H1 (cell line): ENCODE measurements at regions of chr9 and their contacts with region 1.

Region 1: DNA sequence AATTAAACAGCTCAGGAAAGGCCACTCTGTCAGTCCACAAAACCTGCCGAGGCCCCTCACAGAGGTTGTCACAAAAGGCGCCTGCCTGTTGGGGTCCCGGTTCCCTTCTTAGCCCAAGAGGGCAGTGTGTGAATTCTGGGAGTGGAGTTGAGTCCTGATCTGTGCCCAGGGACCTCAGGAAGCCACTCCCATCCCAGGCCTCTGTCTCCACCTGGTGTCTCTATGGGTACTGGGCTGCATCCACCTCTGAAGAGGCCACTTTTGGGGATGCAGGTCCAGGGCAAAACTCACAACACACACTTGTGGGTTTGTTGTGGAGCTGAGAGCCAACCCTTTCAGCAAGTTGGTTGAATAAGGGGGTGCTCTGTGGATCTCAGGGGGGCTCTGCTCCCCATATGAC is 74.3 kb upstream of the STXBP1 start:
- DNase-seq: no peak
- H3K4me3 ChIP-seq: no peak overlapping the region
- H3K27ac ChIP-seq: no peak overlapping the region
- H3K4me1 ChIP-seq: peaks cover 4 to 13% (median 10%) of the 10 kb centered on the region in 4 experiments; a peak in 5 of 7 replicates
- H3K27me3 ChIP-seq: no peaks in the 10 kb centered on the region
- CTCF ChIP-seq: peak in 2 of 3 experiments; percentile 65 to 80; a peak in 3 of 4 replicates
- EP300 ChIP-seq: no peak
- POLR2A ChIP-seq: no peak
- RAD21 ChIP-seq: peak; percentile 71 to 81

Region 2: GRCh38 chr9:127406799-127407509 is 130.8 kb before region 1 on chr9:
- CTCF ChIA-PET with region 1: no interaction called
- POLR2A ChIA-PET with region 1: no interaction called
- DNase-seq: no peak
- H3K4me3 ChIP-seq: no peak overlapping the region
- H3K27ac ChIP-seq: no peak overlapping the region
- H3K4me1 ChIP-seq: no peaks in the 10 kb centered on the region
- H3K27me3 ChIP-seq: no peaks in the 10 kb centered on the region
- CTCF ChIP-seq: no peak
- EP300 ChIP-seq: no peak
- POLR2A ChIP-seq: no peak
- RAD21 ChIP-seq: no peak

Region 3: DNA sequence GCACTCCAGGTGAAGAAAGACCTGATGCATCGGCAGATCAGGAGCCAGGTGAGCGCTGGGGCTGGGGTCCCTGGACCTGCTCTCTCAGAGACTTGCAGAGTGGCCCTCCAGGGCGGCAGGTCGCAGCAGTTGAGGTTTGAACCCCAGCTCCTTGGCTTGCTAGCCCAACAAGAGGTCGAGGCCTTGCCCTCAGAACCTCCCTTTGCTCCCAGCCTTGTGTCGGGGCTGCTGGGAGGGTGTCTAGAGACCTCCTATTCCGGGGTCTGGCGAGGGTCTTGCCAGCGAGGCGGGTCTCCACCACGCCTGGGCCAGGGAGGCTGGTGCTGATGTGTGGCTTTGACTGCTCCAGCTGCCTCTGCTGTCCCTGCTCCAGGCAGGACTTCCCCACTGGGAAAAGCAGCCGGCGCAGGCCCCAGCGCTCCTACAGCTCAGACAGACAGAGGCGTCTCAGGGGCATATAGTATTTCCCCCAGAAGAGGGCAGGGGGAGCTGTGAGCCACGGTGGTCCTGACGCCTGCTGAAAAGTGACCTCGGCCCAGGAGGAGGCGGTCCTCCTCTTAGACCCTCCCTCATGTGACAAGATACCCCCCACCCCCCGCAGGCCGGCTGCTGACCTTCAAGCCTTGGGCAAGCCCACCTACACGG is 48.2 kb before region 1 on chr9:
- CTCF ChIA-PET with region 1: interaction called, 12 read pairs
- POLR2A ChIA-PET with region 1: no interaction called
- DNase-seq: peak; percentile 64 to 79
- H3K4me3 ChIP-seq: no peak overlapping the region
- H3K27ac ChIP-seq: 0 out of 2 replicates have a peak overlapping the region, but pooled peaks have one; percentile 37
- H3K4me1 ChIP-seq: peaks cover 0 to 7% (median 2%) of the 10 kb centered on the region in 4 experiments; a peak in 5 of 7 replicates
- H3K27me3 ChIP-seq: no peaks in the 10 kb centered on the region
- CTCF ChIP-seq: peak; percentile 69 to 77 (median 72)
- EP300 ChIP-seq: no peak
- POLR2A ChIP-seq: no peak
- RAD21 ChIP-seq: peak; percentile 53 to 67

Region 4: GRCh38 chr9:127525401-127526187 is 12.2 kb before region 1 on chr9:
- CTCF ChIA-PET with region 1: interaction called, 105 read pairs
- POLR2A ChIA-PET with region 1: interaction called, 7 read pairs
- DNase-seq: no peak
- H3K4me3 ChIP-seq: no peak overlapping the region
- H3K27ac ChIP-seq: no peak overlapping the region
- H3K4me1 ChIP-seq: peaks cover 6 to 31% (median 11%) of the 10 kb centered on the region in 4 experiments
- H3K27me3 ChIP-seq: no peaks in the 10 kb centered on the region
- CTCF ChIP-seq: peak in 2 of 3 experiments; percentile 64 to 80; a peak in 3 of 4 replicates
- EP300 ChIP-seq: no peak
- POLR2A ChIP-seq: no peak
- RAD21 ChIP-seq: peak; percentile 54 to 61

Region 5: GRCh38 chr9:127550751-127551150 is 13.0 kb after region 1 on chr9:
- CTCF ChIA-PET with region 1: interaction called, 33 read pairs
- POLR2A ChIA-PET with region 1: interaction called, 4 read pairs
- DNase-seq: no peak
- H3K4me3 ChIP-seq: no peak overlapping the region
- H3K27ac ChIP-seq: no peak overlapping the region
- H3K4me1 ChIP-seq: peaks cover 0 to 19% (median 5%) of the 10 kb centered on the region in 4 experiments; a peak in 6 of 7 replicates
- H3K27me3 ChIP-seq: no peaks in the 10 kb centered on the region
- CTCF ChIP-seq: no peak
- EP300 ChIP-seq: no peak
- POLR2A ChIP-seq: no peak
- RAD21 ChIP-seq: no peak

Region 6: DNA sequence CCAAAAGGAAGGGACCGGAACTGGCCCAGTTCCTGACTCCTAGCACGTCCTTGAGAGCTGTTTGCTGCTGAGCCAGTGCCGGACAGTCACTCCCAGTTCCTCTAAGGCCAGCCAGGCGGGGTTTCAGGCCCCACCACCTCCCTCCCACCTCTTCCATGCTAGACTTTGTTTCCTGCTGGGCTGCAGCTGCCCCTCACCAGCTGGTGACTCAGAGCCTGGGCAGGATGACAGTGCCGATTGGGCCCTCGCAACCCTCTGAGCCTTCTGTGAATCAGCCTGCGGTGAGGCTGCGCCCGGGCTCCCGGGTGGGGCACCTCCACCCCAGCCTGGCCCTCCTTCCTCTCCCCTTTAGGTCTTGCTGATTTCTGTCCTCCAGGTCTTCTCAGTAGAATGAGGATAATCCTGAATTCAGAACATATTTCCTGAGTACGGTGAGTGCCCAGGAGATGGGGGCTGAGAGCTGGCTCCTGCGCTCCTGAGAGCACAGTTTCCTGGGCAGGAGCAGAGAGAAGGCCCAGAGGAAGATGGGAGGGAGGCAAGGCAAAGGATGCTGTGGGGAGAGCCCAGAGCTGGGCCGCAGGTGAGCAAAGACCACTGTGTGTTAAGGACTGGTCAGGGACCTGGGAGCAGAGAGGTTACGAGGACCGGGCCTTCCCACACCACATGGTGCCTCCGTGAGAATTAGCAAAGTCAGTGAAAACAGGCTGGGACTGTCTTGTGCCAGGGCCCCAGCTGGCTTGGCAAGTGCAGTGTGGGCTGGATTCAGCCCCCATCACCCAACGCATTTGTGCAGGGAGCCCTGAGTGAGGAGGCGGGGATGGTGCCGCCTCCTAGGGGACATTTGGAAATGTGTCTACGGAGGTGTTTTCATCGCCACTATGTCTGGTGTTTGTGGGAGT is 41.4 kb after region 1 on chr9:
- CTCF ChIA-PET with region 1: interaction called, 89 read pairs
- POLR2A ChIA-PET with region 1: interaction called, 4 read pairs
- DNase-seq: no peak
- H3K4me3 ChIP-seq: no peak overlapping the region
- H3K27ac ChIP-seq: no peak overlapping the region
- H3K4me1 ChIP-seq: peaks cover 0 to 11% (median 8%) of the 10 kb centered on the region in 4 experiments; a peak in 6 of 7 replicates
- H3K27me3 ChIP-seq: no peaks in the 10 kb centered on the region
- CTCF ChIP-seq: peak; percentile 50 to 56 (median 50)
- EP300 ChIP-seq: no peak
- POLR2A ChIP-seq: no peak
- RAD21 ChIP-seq: peak; percentile 38 to 56; a peak in 3 of 4 replicates